BJ (cell line): ENCODE measurements at regions of chr15 and their contacts with region 1.

Region 1: DNA sequence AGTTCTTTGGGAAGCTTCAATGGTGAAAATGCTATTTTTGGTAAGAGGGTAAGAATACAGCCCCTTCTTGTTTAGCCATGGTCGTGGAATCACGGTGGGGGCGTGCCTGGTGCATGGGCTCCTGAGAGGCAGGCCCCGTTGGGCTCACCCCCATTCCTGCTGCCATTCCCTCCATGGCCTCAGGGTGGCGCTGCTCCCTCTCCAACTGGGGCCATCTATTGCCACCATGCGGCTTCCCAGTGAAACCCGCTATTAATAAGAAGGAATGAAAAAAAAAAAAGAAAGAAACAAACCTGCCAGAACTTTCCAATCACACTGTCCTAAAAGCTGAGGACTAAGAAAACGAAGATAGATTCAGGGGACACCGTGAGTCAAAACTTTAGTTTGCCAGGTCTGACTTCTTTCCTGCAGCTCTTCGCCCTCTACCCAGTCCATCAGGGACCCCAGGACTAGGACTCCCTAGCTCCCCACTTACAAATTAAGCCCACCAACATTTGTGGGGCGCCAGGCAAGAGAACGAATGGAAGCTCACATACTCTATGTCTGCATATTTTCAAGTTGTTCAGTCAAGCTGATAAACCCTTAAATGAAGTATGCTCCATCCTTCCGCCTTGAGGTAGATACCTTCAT is 30.6 kb upstream of the ABHD2 start:
- DNase-seq: peak; percentile 6
- H3K4me3 ChIP-seq: no peak overlapping the region
- H3K27me3 ChIP-seq: no peaks in the 10 kb centered on the region
- CTCF ChIP-seq: peak; percentile 98

Region 2: GRCh38 chr15:88803241-88803919 is 254.2 kb before region 1 on chr15 and contains the start of gene ACAN:
- CTCF ChIA-PET with region 1: no interaction called
- POLR2A ChIA-PET with region 1: no interaction called
- DNase-seq: no peak
- H3K4me3 ChIP-seq: no peak within 1 kb of the TSS
- H3K27me3 ChIP-seq: peaks cover 37% of the 10 kb centered on the region
- CTCF ChIP-seq: no peak
- polyA plus RNA-seq, gene ACAN: 0.85 and 3.6 TPM in 2 replicates

Region 3: GRCh38 chr15:88887068-88887580 is 170.5 kb before region 1 on chr15:
- CTCF ChIA-PET with region 1: no interaction called
- POLR2A ChIA-PET with region 1: no interaction called
- DNase-seq: no peak
- H3K4me3 ChIP-seq: no peak overlapping the region
- H3K27me3 ChIP-seq: no peaks in the 10 kb centered on the region; the same call in 1 of the 2 replicates
- CTCF ChIP-seq: no peak

Region 4: GRCh38 chr15:88974392-88974791 is 83.2 kb before region 1 on chr15:
- CTCF ChIA-PET with region 1: no interaction called
- POLR2A ChIA-PET with region 1: no interaction called
- DNase-seq: no peak
- H3K4me3 ChIP-seq: no peak overlapping the region
- H3K27me3 ChIP-seq: no peaks in the 10 kb centered on the region
- CTCF ChIP-seq: no peak

Region 5: GRCh38 chr15:89087830-89088604 is 30.4 kb after region 1 on chr15 and contains the start of gene ABHD2:
- CTCF ChIA-PET with region 1: interaction called, 16 read pairs
- POLR2A ChIA-PET with region 1: interaction called, 3 read pairs
- DNase-seq: peak; percentile 100
- H3K4me3 ChIP-seq: peak within 1 kb of the TSS; percentile 85
- H3K27me3 ChIP-seq: no peaks in the 10 kb centered on the region
- CTCF ChIP-seq: no peak
- polyA plus RNA-seq, gene ABHD2: 47.2 and 69.6 TPM in 2 replicates

Region 6: DNA sequence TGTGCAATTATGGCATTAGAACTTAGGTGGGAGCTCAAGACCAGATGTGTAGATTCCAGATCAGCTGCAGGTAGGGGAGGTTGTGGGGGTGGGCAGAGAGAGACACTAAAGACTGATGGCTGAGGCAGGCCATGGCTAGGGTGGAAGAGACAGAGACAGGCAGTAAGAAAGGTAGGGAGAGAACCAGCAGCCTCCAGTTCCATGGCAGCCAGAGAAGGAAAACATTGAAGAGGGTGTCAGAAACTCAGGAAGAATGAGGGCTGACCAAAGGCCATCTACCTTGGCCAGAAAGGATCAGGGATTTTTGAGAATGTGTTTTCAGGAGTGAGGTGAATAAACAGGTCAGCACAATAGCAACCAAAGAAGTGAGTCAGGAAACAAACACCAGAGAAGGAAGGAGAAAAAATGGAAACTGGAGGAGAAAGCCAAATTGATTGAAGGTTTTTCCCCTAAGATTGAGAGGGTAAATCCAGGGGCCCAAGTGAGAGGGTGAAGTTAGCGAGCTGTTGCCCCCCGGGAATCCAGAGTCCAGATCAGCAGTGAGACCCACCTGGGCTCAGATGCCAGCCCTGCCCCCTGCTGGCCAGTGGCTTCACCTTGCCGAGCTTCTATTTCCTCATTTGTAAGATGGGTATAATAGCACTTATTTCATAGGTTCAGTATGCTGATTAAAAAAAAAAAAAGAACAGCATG is 71.7 kb after region 1 on chr15:
- CTCF ChIA-PET with region 1: interaction called, 25 read pairs
- POLR2A ChIA-PET with region 1: no interaction called
- DNase-seq: no peak
- H3K4me3 ChIP-seq: no peak overlapping the region
- H3K27me3 ChIP-seq: no peaks in the 10 kb centered on the region
- CTCF ChIP-seq: peak; percentile 75

Region 7: DNA sequence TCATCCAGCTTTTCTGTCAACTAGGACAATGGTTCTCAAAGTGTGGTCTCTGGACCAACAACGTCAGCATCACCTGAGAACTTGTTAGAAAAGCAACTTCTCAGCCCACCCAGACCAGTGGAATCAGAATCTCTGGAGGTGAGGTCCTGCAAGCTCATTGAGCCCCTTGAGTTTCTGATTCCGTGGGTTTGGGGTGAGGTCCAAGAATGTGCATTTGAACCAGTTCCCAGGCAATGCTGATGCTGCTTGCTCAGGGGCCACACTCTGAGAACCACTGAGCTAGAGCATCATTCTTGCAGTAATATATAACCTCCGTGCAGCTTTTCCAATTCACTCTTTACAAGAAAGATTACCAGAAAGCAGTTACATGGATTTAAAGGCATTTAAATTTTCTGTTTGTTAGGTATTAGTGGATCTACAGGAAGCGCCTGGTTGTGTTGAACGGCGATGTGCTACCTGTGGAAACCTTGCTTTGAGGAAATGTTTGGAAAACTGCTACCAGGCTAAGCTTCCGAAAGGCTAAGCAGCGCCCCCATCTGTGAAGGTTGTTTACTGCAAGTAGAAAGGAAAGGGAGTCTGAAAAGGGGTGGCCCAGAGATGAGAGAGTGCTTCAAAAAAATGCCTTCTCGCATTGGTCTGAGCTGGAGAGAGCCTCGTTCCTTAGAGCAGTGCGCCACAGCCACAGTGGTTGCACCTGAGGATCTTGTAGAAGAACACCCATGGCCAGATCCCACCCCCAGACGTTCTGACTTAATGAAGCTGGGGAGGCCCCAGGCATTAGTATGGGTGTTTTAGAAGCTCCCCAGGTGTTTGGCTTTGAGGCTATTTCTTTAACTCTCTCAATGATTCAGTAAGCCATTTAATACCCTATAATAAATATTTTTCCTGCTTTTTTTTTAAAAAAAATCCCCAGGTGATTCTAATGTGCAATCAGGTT is 113.8 kb after region 1 on chr15:
- CTCF ChIA-PET with region 1: interaction called, 306 read pairs
- POLR2A ChIA-PET with region 1: no interaction called
- DNase-seq: no peak
- H3K4me3 ChIP-seq: no peak overlapping the region
- H3K27me3 ChIP-seq: no peaks in the 10 kb centered on the region
- CTCF ChIP-seq: peak; percentile 71